MCF 10A (cell line): ENCODE measurements at regions of chr16 and their contacts with region 1.

Region 1: DNA sequence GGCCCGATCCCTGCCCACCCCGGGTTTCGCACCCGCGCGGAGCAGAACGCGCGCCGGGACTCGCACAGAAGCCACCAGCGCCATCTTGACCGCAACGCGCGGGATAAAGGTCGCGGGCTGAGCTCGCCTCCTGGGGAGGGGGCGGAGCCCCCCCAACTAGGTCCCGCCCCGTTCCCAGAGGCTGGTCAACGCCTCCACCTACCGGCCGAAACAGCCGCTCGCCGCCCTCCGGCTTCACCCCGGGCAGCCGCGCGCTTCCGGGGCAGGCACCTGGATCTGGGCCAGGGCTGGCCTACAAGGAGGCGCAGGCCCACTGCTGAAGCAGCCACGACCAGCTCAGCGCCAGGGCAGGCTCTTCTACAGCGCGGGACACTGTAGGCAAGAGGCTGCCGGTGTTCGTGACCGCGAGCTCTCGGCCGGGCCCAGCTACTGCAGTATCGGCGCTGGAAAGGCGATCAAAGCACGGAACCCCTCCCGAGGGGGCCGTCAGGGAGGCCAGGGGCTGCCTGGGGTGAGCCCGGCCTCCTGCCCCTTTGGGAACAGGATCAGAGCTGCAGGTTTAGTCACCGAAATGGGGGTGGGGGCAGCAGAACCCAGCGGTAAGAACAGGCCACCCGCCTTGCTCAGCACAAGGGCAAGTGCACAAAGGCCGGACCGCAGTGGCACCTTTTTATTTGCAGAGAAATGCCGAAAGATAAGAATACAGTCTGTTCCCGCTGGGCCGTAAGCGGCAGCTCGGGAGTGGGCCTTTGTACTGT is at the start of gene ECI1:
- DNase-seq: peak; percentile 94
- H3K4me3 Mint-ChIP-seq: peak within 1 kb of the TSS; percentile 92
- H3K27ac Mint-ChIP-seq: peak within 1 kb of the TSS; percentile 91
- H3K4me1 Mint-ChIP-seq: no peaks in the 10 kb centered on the region
- H3K27me3 Mint-ChIP-seq: no peaks in the 10 kb centered on the region
- CTCF ChIP-seq: peak; percentile 51
- total RNA-seq, gene ECI1: 115 and 154 TPM in 2 replicates

Region 2: DNA sequence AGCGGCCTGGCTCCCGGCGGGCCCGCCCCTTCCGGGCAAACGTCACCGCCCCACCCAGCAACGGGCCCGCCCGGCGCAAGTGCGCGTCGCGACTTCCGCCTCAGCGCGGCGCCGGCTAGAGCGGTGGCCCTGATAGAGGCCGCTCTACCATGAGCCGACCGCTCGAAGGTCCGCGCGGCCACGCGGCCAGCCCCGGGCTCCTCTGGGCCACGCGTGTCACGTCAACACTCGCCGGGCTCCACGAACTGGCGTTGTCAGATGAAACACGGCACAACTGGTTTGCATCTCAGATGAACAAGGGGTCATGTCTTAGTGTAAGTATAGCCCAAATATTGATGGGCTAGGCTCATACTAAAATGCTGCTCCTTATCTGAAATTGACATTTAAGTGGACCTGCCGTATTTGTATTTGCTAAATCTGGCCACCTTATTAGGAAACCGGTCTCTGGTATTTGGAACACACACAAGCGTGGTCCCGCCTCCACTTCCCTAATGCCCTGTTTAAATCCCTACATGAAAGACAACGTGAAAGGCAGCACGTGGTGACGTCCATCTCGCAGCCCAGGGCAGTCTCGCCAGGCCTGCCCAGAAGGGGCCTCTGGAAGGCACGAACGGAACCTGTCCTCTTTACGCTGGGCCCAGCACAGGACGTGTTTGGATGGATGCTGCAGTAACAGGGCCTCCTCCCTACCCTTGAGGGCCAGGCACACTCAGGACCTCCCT is 241.7 kb before region 1 on chr16 and contains the start of gene ZNF598:
- CTCF ChIA-PET with region 1: interaction called, 3 read pairs
- POLR2A ChIA-PET with region 1: interaction called, 16 read pairs
- intact Hi-C with region 1: no loop called
- DNase-seq: peak; percentile 86
- H3K4me3 Mint-ChIP-seq: peak within 1 kb of the TSS; percentile 79
- H3K27ac Mint-ChIP-seq: peak within 1 kb of the TSS; percentile 97
- H3K4me1 Mint-ChIP-seq: peaks cover 17% of the 10 kb centered on the region
- H3K27me3 Mint-ChIP-seq: no peaks in the 10 kb centered on the region
- CTCF ChIP-seq: no peak
- total RNA-seq, gene ZNF598: 177 and 252 TPM in 2 replicates

Region 3: DNA sequence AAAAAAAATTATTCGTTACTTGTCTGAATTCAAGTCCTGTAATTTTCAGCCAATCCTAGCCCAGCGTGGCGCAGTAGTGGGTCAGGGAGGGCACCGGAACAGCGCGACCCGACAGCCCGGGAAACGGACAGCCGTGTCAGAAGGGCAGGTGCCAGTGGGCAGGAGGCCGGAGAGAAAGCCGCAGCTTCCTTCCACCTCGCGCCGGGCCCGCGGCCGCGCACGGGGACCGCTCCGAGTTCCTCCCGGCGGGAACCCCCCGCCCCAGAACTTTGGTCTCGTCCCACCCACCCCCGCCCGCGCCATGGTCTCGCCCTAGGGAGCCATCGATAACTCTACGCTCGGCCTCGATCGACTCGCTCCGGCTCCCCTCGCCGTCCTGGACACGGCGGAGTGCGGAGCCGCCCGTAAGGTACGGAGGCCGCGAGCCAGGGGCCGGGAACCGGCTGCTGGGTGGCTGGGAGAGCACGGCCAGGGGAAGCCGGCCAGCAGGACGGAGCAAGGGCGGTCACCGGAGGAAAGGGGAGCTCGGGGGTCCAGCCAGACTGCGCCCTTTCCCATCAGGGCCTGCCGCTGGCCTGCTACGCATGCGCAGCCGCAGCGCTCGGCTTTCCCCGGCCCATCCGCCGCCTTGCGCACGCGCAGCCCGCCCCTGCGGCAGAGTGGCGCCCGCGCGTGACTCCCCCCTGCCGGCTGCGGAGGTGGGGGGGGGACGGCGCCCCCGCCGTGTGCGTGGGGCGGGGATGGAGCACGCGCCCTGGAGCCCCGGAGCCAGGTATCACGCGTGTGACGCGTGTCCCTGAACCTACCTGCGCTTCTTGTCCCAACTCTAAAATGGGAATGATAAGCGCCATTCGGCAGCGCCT is 46.3 kb before region 1 on chr16 and contains the start of gene MLST8:
- CTCF ChIA-PET with region 1: interaction called, 3 read pairs
- POLR2A ChIA-PET with region 1: interaction called, 10 read pairs
- intact Hi-C with region 1: no loop called
- DNase-seq: peak; percentile 79
- H3K4me3 Mint-ChIP-seq: peak within 1 kb of the TSS; percentile 68
- H3K27ac Mint-ChIP-seq: peak within 1 kb of the TSS; percentile 69
- H3K4me1 Mint-ChIP-seq: peaks cover 15% of the 10 kb centered on the region
- H3K27me3 Mint-ChIP-seq: no peaks in the 10 kb centered on the region
- CTCF ChIP-seq: peak; percentile 13
- total RNA-seq, gene MLST8: 63.4 and 87.6 TPM in 2 replicates

Region 4: DNA sequence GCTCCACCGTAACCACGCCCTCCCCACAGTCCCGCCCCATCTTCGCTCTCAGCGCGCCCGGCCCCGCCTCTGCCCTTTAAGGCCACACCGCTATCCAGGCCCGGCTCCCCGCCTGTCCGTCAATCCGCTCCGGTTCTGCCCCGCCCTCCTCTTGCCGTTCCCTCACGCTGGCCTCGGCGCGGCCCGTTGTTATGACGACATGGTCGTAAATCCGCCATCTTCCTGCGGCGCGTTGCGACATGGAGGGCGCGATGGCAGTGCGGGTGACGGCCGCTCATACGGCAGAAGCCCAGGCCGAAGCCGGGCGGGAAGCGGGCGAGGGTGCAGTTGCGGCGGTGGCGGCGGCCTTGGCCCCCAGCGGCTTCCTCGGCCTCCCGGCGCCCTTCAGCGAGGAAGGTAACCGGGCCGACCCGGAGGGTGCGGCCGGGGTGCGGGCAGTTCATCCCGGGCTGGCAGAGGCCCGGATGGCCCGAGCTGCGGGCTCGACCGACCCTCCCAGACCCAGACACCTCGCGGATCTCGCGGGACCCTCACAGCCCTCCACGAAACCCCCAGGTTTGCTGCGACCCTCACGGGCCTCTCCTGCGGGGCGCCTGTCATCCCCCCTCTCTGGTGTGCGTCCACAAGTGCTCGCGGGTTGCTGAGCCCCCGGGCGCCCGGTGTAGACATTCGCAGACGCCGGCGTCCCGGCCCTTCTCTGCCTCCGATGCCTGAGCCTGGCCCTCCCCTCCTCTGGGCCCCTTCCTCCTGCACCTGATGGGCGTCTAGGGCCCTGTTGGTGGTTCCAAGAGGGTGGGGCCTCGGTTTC is 28.1 kb before region 1 on chr16 and contains the start of gene E4F1:
- CTCF ChIA-PET with region 1: interaction called, 4 read pairs
- POLR2A ChIA-PET with region 1: interaction called, 21 read pairs
- intact Hi-C with region 1: loop called (anchors 2 kb)
- DNase-seq: peak; percentile 98
- H3K4me3 Mint-ChIP-seq: peak within 1 kb of the TSS; percentile 78
- H3K27ac Mint-ChIP-seq: peak within 1 kb of the TSS; percentile 85
- H3K4me1 Mint-ChIP-seq: peaks cover 4% of the 10 kb centered on the region
- H3K27me3 Mint-ChIP-seq: no peaks in the 10 kb centered on the region
- CTCF ChIP-seq: no peak
- total RNA-seq, gene E4F1: 26.2 and 28.4 TPM in 2 replicates

Region 5: GRCh38 chr16:2267913-2268666 is 16.4 kb after region 1 on chr16 and contains the start of gene RNPS1:
- CTCF ChIA-PET with region 1: interaction called, 3 read pairs
- POLR2A ChIA-PET with region 1: interaction called, 43 read pairs
- intact Hi-C with region 1: no loop called
- DNase-seq: peak; percentile 95
- H3K4me3 Mint-ChIP-seq: peak within 1 kb of the TSS; percentile 97
- H3K27ac Mint-ChIP-seq: peak within 1 kb of the TSS; percentile 99
- H3K4me1 Mint-ChIP-seq: peaks cover 15% of the 10 kb centered on the region
- H3K27me3 Mint-ChIP-seq: no peaks in the 10 kb centered on the region
- CTCF ChIP-seq: no peak
- total RNA-seq, gene RNPS1: 245 and 247 TPM in 2 replicates

Region 6: GRCh38 chr16:2388875-2389433 is 137.3 kb after region 1 on chr16:
- CTCF ChIA-PET with region 1: no interaction called
- POLR2A ChIA-PET with region 1: no interaction called
- intact Hi-C with region 1: no loop called
- DNase-seq: peak; percentile 18
- H3K4me3 Mint-ChIP-seq: no peak overlapping the region
- H3K27ac Mint-ChIP-seq: no peak overlapping the region
- H3K4me1 Mint-ChIP-seq: peaks cover 7% of the 10 kb centered on the region
- H3K27me3 Mint-ChIP-seq: no peaks in the 10 kb centered on the region
- CTCF ChIP-seq: no peak

Region 7: GRCh38 chr16:2513405-2514322 is 262.0 kb after region 1 on chr16 and contains the start of gene ATP6V0C:
- CTCF ChIA-PET with region 1: no interaction called
- POLR2A ChIA-PET with region 1: interaction called, 15 read pairs
- intact Hi-C with region 1: no loop called
- DNase-seq: peak; percentile 88
- H3K4me3 Mint-ChIP-seq: peak within 1 kb of the TSS; percentile 87
- H3K27ac Mint-ChIP-seq: peak within 1 kb of the TSS; percentile 94
- H3K4me1 Mint-ChIP-seq: peaks cover 29% of the 10 kb centered on the region
- H3K27me3 Mint-ChIP-seq: no peaks in the 10 kb centered on the region
- CTCF ChIP-seq: no peak
- total RNA-seq, gene ATP6V0C: 173 and 198 TPM in 2 replicates